Calu3 (cell line): ENCODE measurements at regions of chr9 and their contacts with region 1.

Region 1: GRCh38 chr9:35258676-35259474 is 97.1 kb downstream of the UNC13B start:
- DNase-seq: peak; percentile 60
- H3K4me3 Mint-ChIP-seq: no peak overlapping the region
- H3K27ac Mint-ChIP-seq: no peak overlapping the region
- H3K4me1 Mint-ChIP-seq: peaks cover 27% of the 10 kb centered on the region
- H3K27me3 Mint-ChIP-seq: no peaks in the 10 kb centered on the region
- CTCF ChIP-seq: peak; percentile 28

Region 2: DNA sequence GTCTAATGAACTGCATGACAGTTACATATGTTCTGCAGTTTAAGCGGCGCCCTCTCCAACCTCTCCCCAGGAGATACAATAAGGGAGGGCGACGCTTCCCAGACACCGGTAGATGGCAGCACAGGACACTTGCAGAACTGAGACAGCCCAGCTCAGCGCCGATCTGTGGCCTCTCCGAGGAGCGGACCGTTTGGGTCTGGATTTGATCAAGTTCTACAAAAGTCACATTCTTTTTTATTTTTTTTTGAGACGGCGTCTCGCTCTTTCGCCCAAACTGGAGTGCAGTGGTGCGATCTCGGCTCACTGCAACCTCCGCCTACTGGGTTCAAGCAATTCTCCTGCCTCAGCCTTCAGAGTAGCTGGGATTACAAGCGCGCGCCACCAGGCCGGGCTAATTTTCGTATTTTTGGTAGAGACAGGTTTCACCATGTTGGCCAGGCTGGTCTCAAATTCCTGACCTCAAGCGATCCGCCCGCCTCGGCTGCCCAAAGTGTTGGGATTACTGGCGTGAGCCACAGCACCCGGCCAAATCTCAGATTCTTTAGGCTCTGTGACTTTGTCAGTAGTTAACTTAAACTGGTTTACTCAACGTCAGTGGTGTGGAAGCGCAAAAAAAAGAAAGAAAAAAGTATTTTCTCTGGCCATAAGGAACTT is 141.8 kb before region 1 on chr9:
- CTCF ChIA-PET with region 1: interaction called, 34 read pairs
- intact Hi-C with region 1: loop called (anchors 1 kb)
- DNase-seq: peak; percentile 85
- H3K4me3 Mint-ChIP-seq: peak overlapping the region; percentile 89
- H3K27ac Mint-ChIP-seq: peak overlapping the region; percentile 61
- H3K4me1 Mint-ChIP-seq: peaks cover 26% of the 10 kb centered on the region
- H3K27me3 Mint-ChIP-seq: no peaks in the 10 kb centered on the region
- CTCF ChIP-seq: peak; percentile 70

Region 3: GRCh38 chr9:35161713-35162604 is 96.9 kb before region 1 on chr9 and contains the start of gene UNC13B:
- CTCF ChIA-PET with region 1: interaction called, 5 read pairs
- intact Hi-C with region 1: loop called (anchors 5 kb)
- DNase-seq: peak; percentile 95
- H3K4me3 Mint-ChIP-seq: peak within 1 kb of the TSS; percentile 95
- H3K27ac Mint-ChIP-seq: peak within 1 kb of the TSS; percentile 92
- H3K4me1 Mint-ChIP-seq: peaks cover 11% of the 10 kb centered on the region
- H3K27me3 Mint-ChIP-seq: no peaks in the 10 kb centered on the region
- CTCF ChIP-seq: no peak
- total RNA-seq, gene UNC13B: 20.4 and 24.4 TPM in 2 replicates

Region 4: GRCh38 chr9:35423499-35423898 is 164.6 kb after region 1 on chr9:
- CTCF ChIA-PET with region 1: no interaction called
- intact Hi-C with region 1: no loop called
- DNase-seq: peak; percentile 7
- H3K4me3 Mint-ChIP-seq: peak overlapping the region; percentile 10
- H3K27ac Mint-ChIP-seq: peak overlapping the region; percentile 95
- H3K4me1 Mint-ChIP-seq: peaks cover 45% of the 10 kb centered on the region
- H3K27me3 Mint-ChIP-seq: no peaks in the 10 kb centered on the region
- CTCF ChIP-seq: no peak